Left colon (tissue), 2 donors: ENCODE measurements at regions of chr3 and their contacts with region 1.

Region 1: DNA sequence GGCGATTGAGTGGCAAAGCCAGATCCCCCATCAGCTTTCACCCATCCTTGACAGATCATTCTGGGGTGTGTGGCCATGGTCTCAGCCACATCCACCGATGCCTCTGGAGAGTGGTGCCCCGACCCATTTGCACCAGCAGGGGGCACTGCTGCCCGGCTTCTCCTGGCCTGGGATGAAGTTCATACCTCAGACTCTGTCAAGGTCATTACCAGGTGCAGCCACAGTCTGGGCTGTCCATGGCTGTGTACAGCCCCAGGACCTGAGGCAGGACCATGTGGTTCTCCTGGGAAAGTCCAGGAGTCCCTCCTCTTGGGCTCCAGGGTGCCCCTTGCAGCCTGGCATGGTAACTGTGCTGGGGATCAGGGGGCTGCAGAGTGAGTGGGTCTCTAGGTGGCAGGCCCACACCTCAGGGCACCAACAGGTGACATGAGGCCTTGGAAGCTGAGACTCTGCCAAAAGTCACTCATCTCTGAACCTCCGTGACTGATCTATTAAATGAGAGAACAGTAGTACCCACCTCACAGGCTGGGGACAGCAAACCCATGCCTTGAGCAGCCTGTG is 67.2 kb downstream of the CACNA2D2 start:
- DNase-seq: peak in 1 of 2 donors; percentile 77
- ATAC-seq: peak; percentile 93

Region 2: DNA sequence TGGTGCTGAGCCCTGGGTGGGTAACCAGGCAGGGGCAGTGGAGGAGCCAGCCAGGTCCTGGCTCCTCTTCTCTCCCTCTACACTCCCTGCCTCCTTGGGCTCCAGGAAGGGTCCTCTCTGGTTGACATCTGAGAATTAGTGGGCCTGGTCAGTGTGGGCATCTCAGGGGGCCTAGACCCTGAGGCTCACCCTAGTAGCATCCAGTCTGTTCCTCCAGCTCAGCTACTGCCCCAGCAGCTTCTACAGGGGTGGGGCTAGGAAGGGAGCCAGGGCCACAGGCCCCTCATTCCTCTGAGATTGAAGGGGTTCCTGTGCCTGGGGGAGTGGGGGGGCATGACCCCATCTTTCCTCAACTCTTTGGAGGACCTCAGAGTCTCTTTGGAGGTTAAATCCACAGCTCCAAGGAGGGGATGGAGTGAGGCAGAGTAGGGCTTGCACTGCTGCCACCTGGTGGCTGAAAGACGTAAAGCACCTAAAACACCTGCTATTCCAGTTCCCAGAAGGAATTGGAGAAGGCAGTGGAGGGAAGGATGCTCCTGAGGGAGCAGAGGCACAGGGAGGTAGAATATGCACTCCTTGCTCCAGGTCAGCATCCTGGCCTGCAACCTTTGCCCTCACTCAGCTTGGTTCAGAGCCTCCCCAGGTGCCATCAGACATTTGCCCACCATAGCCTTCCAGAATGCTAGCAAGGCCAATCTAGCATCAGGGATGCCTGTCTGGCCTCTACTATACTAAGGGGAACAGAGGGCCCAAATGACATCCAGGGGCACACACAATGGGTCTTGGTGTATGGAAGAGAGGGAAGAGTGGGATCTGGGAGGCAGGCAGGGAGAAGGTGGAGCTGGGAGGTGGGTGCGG is 106.2 kb after region 1 on chr3:
- intact Hi-C with region 1: loop called (anchors 5 to 10 kb)
- DNase-seq: peak; percentile 39 to 78
- ATAC-seq: peak; percentile 87

Region 3: DNA sequence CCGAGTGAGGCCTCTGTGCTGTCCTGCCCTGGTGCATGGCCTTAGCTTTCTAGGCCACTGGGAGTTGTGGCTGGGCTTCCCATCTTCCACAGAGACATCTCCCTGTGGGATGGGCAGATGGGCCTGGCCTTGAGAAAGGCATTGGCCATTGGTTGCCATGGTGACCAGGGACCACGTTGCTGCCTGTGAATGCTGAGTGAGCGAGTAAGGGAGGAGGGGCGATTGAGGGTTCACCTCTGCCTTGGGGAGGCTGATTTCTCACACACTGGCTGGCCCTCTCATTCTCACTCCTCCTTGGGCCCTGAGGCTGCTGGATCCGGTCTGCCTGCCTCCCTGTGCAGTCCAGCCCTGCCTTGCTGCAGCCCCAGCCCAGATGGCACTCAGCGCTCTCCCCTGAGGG is 212.1 kb after region 1 on chr3:
- intact Hi-C with region 1: no loop called
- DNase-seq: no peak
- ATAC-seq: no peak

Region 4: GRCh38 chr3:50950591-50950990 is 514.4 kb after region 1 on chr3:
- intact Hi-C with region 1: no loop called
- DNase-seq: no peak
- ATAC-seq: no peak